PC-9 (cell line): ENCODE measurements at regions of chr14 and their contacts with region 1.

Region 1: GRCh38 chr14:68577827-68578541 is 214.9 kb downstream of the ZFP36L1 start:
- DNase-seq: peak; percentile 84 to 99
- H3K4me3 ChIP-seq: peak overlapping the region; percentile 19; the same call in 1 of the 2 replicates
- H3K27ac ChIP-seq: peak overlapping the region; percentile 93
- H3K4me1 ChIP-seq: peaks cover 54% of the 10 kb centered on the region
- H3K27me3 ChIP-seq: no peaks in the 10 kb centered on the region
- CTCF ChIP-seq: no peak

Region 2: GRCh38 chr14:67943947-67944346 is 634.0 kb before region 1 on chr14:
- CTCF ChIA-PET with region 1: no interaction called
- POLR2A ChIA-PET with region 1: interaction called, 4 read pairs
- intact Hi-C with region 1: loop called (anchors 1 kb)
- DNase-seq: peak; percentile 54 to 67
- H3K4me3 ChIP-seq: no peak overlapping the region
- H3K27ac ChIP-seq: peak overlapping the region; percentile 37
- H3K4me1 ChIP-seq: peaks cover 43% of the 10 kb centered on the region
- H3K27me3 ChIP-seq: no peaks in the 10 kb centered on the region
- CTCF ChIP-seq: peak; percentile 91

Region 3: DNA sequence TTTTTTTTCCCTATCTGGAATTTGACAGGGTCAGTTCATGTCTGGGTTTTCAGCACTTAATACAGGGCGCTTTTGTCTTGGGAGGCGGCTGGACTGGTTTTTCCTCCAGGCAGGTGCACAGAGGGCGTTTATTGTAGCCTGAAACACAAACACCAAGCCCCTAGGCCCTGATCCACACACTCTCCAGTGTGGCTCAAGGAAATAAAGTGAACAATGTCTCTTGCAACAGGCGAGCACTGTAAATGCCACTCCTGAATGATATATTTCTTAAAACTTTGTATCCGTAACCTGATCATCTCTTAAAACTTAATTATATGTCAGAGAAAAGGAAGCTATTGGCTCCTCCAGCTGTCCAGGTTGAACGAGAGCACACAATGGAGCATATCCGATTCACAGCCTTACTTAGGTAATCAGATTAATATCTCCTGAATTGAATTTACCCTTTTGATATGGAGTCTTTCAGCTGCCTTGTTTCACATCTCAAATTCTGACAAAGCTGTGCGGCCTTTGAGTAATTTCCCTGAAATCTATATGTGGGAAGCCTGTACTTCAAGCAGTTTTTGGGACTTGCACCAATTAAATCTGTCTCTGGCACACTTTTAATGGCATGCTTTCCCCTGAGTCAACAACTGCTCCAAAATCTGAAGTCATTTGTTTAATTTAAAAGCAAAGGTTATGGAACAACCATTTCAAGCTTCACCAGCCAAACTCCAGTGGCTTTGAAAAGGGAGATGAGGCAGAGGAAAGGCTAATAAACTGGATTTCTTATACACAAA is 270.8 kb before region 1 on chr14:
- CTCF ChIA-PET with region 1: no interaction called
- POLR2A ChIA-PET with region 1: no interaction called
- intact Hi-C with region 1: loop called (anchors 1 kb)
- DNase-seq: peak; percentile 73 to 99
- H3K4me3 ChIP-seq: peak overlapping the region; percentile 22; the same call in 1 of the 2 replicates
- H3K27ac ChIP-seq: peak overlapping the region; percentile 95
- H3K4me1 ChIP-seq: peaks cover 62% of the 10 kb centered on the region
- H3K27me3 ChIP-seq: no peaks in the 10 kb centered on the region
- CTCF ChIP-seq: no peak

Region 4: DNA sequence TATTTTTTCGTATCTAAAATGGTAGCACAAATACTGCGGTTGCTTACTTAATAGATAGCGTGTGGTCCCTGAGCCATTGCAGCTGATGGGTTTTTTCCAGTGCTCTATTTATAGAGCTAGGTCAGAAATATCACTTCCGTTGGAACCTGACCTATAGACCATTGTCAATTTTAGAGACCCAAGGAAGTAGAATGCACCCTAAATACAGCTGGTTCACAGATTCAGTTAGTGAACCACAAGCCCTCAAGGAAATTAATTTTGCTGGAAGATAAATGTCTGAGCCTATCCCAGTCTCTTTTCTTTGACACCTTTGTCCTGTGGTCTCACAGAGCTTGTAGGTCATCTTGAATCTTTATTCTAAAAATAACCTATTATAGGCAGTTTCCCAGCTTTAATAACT is 176.1 kb before region 1 on chr14:
- CTCF ChIA-PET with region 1: no interaction called
- POLR2A ChIA-PET with region 1: no interaction called
- intact Hi-C with region 1: no loop called
- DNase-seq: no peak
- H3K4me3 ChIP-seq: no peak overlapping the region
- H3K27ac ChIP-seq: peak overlapping the region; percentile 77
- H3K4me1 ChIP-seq: peaks cover 43% of the 10 kb centered on the region
- H3K27me3 ChIP-seq: no peaks in the 10 kb centered on the region
- CTCF ChIP-seq: no peak

Region 5: DNA sequence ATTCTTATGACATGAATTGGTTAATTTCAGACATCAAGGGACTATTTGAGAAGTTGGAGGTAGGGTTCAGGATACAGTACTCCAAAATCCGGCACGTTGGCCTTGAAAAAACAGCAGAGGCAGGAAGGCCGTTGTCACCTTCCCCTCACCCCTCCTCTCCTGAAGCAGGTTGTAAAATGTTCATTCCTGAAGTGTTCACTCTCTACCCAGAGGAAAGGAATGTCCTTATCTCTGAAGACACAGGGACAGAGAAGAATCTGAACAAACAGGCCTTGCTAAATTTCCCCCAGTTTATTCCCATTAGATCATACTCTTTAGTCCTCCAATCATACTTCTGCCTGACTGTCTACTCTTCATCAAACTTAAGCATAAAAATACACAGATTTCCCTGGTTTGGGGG is 98.7 kb before region 1 on chr14:
- CTCF ChIA-PET with region 1: no interaction called
- POLR2A ChIA-PET with region 1: no interaction called
- intact Hi-C with region 1: loop called (anchors 1 kb)
- DNase-seq: peak; percentile 57 to 94
- H3K4me3 ChIP-seq: no peak overlapping the region
- H3K27ac ChIP-seq: peak overlapping the region; percentile 95
- H3K4me1 ChIP-seq: peaks cover 86% of the 10 kb centered on the region
- H3K27me3 ChIP-seq: no peaks in the 10 kb centered on the region
- CTCF ChIP-seq: no peak

Region 6: GRCh38 chr14:68548194-68549056 is 29.6 kb before region 1 on chr14:
- CTCF ChIA-PET with region 1: no interaction called
- POLR2A ChIA-PET with region 1: interaction called, 45 read pairs
- intact Hi-C with region 1: loop called (anchors 1 kb)
- DNase-seq: peak; percentile 77 to 86
- H3K4me3 ChIP-seq: no peak overlapping the region
- H3K27ac ChIP-seq: peak overlapping the region; percentile 96
- H3K4me1 ChIP-seq: peaks cover 70% of the 10 kb centered on the region
- H3K27me3 ChIP-seq: no peaks in the 10 kb centered on the region
- CTCF ChIP-seq: no peak

Region 7: DNA sequence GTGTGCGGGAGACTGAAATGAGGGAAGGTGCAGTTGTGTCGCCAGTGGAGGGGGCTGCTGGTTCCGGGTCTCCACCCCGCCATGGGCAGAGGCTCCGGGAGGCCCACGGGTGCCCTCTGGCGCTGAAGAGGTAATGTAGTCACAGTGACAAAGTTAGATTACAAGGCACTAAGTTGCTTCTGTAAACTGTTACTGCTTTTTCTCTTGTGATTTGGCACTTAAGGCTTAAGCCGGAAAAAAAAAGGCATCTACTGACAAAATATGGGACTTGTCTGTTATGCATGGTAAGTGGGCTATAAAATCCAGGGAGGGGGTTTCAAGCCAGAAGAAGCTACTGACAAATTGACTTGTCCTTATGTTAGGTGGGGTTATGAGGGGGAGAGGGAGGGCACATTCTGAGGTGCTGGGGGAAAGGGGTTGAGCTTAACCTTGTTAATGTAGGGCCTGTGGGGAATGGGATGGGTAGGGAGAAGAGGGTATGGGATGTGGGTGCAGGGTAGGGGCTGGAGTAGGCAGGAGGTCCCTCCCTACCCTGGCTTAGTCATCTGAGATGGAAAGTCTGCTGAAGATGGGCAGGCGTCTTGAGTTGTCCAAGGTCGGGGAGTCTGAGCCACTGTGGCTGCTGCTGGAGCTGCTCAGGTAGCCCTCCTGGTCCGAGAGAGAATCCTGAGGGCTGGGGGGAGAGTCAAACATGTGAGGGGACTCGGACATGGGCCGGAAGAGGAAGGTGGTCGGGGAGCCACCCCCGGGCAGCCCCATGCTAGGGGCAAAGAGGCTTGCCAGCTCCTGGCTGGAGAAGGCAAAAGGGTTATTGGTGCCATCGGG is 211.2 kb after region 1 on chr14:
- CTCF ChIA-PET with region 1: interaction called, 5 read pairs
- POLR2A ChIA-PET with region 1: interaction called, 14 read pairs
- intact Hi-C with region 1: loop called (anchors 1 kb)
- DNase-seq: peak; percentile 77 to 88
- H3K4me3 ChIP-seq: peak overlapping the region; percentile 95
- H3K27ac ChIP-seq: peak overlapping the region; percentile 98
- H3K4me1 ChIP-seq: peaks cover 45% of the 10 kb centered on the region
- H3K27me3 ChIP-seq: no peaks in the 10 kb centered on the region
- CTCF ChIP-seq: peak; percentile 80

Region 8: DNA sequence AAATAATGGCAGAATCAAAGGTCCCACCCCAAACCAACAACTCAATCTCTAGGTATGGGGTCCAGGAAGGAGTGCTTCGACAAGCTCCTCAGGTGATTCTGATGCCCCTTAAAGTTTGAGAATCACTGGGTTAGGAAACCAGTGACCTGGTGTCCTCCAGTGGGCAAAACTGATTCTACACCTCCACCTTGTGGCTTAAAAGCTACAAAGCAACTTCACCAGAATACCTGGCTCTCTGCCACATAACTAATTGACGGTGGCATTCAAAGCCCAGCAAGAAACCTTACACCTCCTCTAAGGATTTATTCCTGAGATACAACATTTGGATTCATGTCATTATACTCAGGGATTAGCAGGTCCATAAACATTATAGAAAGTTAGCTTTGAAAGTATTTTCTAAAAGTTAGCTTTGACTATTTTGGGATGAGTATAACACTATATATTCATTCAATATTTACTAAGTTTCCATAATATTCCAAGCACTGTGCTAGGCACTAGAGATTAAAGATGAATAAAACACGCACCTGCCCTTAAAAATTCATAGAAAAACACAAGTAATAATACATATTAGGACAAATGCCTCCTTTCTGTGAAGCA is 529.5 kb after region 1 on chr14:
- CTCF ChIA-PET with region 1: no interaction called
- POLR2A ChIA-PET with region 1: no interaction called
- intact Hi-C with region 1: loop called (anchors 10 kb)
- DNase-seq: peak; percentile 62 to 68
- H3K4me3 ChIP-seq: no peak overlapping the region
- H3K27ac ChIP-seq: no peak overlapping the region
- H3K4me1 ChIP-seq: no peaks in the 10 kb centered on the region
- H3K27me3 ChIP-seq: no peaks in the 10 kb centered on the region
- CTCF ChIP-seq: peak; percentile 90